ENCODE measurements at regions of chr18 and their contacts with region 1.

Region 1: DNA sequence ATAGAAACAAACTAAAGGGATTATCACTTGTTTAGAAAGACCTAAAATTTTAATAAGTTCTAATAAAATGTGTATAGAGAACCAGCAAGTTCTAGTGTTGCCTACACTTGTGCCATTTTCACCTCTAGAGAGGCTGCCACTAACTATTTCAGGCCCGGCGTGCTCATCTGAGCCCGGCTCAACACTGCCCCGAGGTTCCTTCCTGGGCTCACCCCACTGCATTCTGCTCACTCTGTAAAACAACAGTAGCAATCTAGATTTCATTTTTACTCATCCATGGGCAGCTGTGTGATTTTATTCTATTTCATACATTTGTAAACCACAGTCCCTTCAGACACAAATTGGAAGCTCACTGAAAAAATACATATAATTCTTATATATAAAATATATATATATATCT is 253.2 kb downstream of the L3MBTL4 start:
- DNase-seq: no peak
- ATAC-seq: no peak
- H3K4me3 Mint-ChIP-seq: no peak overlapping the region
- H3K27ac Mint-ChIP-seq: no peak overlapping the region
- H3K4me1 Mint-ChIP-seq: no peaks in the 10 kb centered on the region
- H3K27me3 Mint-ChIP-seq: no peaks in the 10 kb centered on the region

Region 2: GRCh38 chr18:6729247-6730091 is 567.9 kb after region 1 on chr18 and contains the start of gene ARHGAP28:
- CTCF ChIA-PET with region 1: no interaction called
- POLR2A ChIA-PET with region 1: no interaction called
- intact Hi-C with region 1: loop called in 1 of 2 experiments (anchors 5 kb)
- DNase-seq: peak; percentile 56
- ATAC-seq: peak; percentile 69
- H3K4me3 Mint-ChIP-seq: peak within 1 kb of the TSS; percentile 66
- H3K27ac Mint-ChIP-seq: no peak within 1 kb of the TSS
- H3K4me1 Mint-ChIP-seq: peaks cover 5% of the 10 kb centered on the region
- H3K27me3 Mint-ChIP-seq: peaks cover 17% of the 10 kb centered on the region
- total RNA-seq, gene ARHGAP28: not detected

Measured in activated CD4-positive, alpha-beta T cell treated with anti-CD3 and anti-CD28 coated beads for 36 hours (primary cell).